ENCODE measurements at regions of chr2 and their contacts with region 1.

Region 1: DNA sequence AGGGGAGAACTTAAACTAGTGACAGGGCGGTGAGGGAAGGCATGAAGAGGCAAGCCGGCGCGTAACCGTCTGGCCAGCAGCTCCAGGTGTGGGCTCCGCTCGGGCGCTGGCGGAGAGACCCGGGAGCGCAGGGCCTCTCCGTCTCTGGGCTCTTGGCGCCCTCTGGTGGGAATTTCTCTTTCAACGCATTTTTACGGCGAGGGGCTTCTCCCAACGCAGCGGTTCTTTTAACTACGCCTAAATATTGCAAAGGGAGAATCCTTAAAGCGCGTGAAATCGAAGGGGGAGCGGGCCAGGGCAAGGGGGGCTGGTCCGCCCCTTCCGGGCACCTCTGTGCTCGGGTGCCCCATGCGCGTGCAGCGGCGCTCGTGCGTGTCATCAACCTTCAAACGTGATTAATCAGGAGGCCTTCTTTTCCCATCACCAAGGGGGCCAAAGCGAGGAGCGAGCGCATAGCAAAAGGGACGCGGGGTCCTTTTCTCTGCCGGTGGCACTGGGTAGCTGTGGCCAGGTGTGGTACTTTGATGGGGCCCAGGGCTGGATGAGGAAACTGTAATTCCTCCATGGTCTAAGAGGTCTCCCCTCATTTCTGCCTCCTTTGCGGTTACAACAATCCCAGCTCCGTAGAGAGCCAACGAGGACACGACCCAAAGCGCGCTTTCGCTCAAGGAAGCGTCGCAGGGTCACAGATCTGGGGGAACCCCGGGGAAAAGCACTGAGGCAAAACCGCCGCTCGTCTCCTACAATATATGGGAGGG is 762 bp upstream of the GAD1 start:
- DNase-seq: peak; percentile 77
- H3K4me3 Mint-ChIP-seq: peak overlapping the region; percentile 68
- H3K27ac Mint-ChIP-seq: no peak overlapping the region
- H3K4me1 Mint-ChIP-seq: peaks cover 43% of the 10 kb centered on the region
- H3K27me3 Mint-ChIP-seq: peaks cover 72% of the 10 kb centered on the region

Region 2: GRCh38 chr2:170235860-170236679 is 579.9 kb before region 1 on chr2:
- CTCF ChIA-PET with region 1: interaction called, 7 read pairs
- intact Hi-C with region 1: loop called (anchors 1 kb)
- DNase-seq: peak; percentile 31
- H3K4me3 Mint-ChIP-seq: no peak overlapping the region
- H3K27ac Mint-ChIP-seq: no peak overlapping the region
- H3K4me1 Mint-ChIP-seq: no peaks in the 10 kb centered on the region
- H3K27me3 Mint-ChIP-seq: peaks cover 13% of the 10 kb centered on the region

Region 3: DNA sequence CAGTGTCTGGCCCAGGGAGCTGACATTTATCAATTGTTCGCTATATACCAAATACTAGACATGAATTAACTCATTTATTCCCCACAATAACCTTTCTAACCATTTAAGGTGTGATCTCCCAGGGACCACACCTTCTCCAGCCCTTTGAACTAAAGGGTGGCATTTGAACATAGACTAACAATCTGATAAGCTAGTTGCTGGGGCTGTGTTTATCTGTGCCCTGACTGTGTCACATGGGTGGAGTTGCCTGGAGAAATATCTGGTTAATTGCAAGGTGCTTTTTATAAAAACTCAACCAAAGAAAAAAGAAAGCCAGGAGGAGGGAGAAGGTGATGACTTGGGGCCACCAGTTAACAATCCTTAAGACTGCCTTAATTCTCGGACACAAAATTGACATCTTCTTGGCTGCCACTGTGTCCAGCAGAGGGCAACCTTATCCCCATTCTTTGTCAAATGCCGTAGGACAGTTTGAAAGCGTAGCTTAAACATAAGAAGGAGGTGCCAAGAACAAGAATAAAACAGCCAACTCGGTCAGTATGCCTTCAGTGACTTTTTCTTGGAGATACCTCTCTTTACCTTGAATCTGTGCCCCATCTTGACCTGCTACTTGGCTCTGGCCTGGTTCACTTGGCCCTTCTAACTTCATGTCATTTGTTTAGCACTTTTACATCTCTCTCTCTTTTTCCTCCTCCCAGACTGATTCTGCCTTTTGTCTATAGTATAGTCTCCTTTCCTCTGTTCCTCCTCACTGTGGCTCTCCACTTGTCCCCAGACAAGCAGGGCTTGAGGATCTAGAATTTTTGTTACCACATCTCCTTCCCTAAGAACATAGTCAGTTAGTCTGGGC is 454.6 kb before region 1 on chr2:
- CTCF ChIA-PET with region 1: interaction called, 21 read pairs
- intact Hi-C with region 1: loop called (anchors 1 kb)
- DNase-seq: peak; percentile 77
- H3K4me3 Mint-ChIP-seq: no peak overlapping the region
- H3K27ac Mint-ChIP-seq: no peak overlapping the region
- H3K4me1 Mint-ChIP-seq: peaks cover 28% of the 10 kb centered on the region
- H3K27me3 Mint-ChIP-seq: peaks cover 6% of the 10 kb centered on the region

Region 4: DNA sequence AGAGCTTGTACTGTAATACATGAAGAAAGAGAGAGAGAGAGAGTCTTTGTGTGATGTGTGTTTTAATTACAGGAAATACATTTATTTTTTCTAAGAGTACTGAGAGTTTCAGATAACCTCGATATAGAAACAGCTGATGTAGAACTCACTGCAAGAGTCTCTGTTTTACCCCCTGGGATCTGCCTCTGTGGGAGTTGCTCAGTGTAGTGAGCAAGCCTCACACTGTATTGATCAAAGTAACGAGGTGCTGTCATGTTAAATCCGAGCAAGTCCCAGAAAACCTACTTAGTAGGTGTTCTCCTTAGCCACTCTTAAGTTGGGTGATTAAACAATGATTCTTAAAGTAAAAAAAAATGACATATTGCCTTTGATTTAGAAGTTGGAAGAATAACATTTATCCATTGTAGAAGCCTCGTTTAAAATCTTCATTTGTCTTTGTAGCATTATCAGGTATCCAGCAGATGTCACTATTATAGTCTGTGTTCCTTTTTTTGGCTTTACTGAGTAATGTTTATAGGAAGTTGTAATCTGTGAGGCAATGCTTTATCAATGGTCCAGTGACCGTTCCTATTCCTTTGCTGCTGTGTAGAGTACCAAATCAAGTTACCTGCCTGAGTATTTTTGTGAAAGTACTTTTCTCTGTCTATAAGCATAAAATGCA is 419.0 kb before region 1 on chr2:
- CTCF ChIA-PET with region 1: interaction called, 5 read pairs
- intact Hi-C with region 1: loop called (anchors 1 kb)
- DNase-seq: no peak
- H3K4me3 Mint-ChIP-seq: no peak overlapping the region
- H3K27ac Mint-ChIP-seq: no peak overlapping the region
- H3K4me1 Mint-ChIP-seq: peaks cover 4% of the 10 kb centered on the region
- H3K27me3 Mint-ChIP-seq: peaks cover 34% of the 10 kb centered on the region

Region 5: DNA sequence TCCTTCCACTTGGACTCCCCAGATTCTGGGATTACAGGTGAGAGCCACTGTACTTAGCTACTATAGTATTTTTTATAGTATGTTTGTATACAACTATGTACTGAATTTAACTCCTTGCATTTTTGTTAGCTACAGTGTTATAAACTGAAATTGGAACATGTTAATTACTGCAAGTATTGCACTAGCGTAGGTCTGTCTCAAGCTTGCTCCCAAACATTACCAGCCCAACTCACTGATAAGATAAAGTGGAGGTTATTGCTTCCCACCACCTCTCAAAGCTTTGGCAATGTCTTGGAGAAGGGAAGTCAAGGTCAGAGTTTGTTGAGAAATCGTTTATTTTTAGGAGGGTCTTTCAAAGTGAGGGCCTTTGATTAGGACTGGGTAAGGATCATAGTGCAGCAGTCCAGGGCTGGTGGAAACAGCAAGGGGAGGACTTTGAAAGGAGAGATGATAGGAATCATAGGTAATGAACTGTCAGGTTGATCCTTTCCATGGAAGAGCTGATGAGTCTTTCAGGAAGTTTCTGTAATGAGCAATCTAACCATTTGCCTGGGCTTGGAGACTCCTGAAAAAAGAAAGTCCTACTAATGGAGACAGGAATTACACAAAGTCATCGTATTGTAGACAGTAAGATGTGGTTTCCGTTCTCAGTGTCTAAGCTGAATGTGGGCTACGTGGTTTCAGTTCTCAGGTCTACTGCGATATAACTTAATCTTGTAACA is 380.9 kb before region 1 on chr2:
- CTCF ChIA-PET with region 1: no interaction called
- intact Hi-C with region 1: loop called (anchors 1 kb)
- DNase-seq: peak; percentile 12
- H3K4me3 Mint-ChIP-seq: no peak overlapping the region
- H3K27ac Mint-ChIP-seq: no peak overlapping the region
- H3K4me1 Mint-ChIP-seq: peaks cover 20% of the 10 kb centered on the region
- H3K27me3 Mint-ChIP-seq: peaks cover 10% of the 10 kb centered on the region

Region 6: GRCh38 chr2:170715062-170715931 is 100.6 kb before region 1 on chr2 and contains the start of gene SP5:
- CTCF ChIA-PET with region 1: interaction called, 13 read pairs
- intact Hi-C with region 1: loop called (anchors 1 kb)
- DNase-seq: no peak
- H3K4me3 Mint-ChIP-seq: peak within 1 kb of the TSS; percentile 76
- H3K27ac Mint-ChIP-seq: no peak within 1 kb of the TSS
- H3K4me1 Mint-ChIP-seq: peaks cover 33% of the 10 kb centered on the region
- H3K27me3 Mint-ChIP-seq: peaks cover 67% of the 10 kb centered on the region
- total RNA-seq, gene SP5: not detected

Region 7: DNA sequence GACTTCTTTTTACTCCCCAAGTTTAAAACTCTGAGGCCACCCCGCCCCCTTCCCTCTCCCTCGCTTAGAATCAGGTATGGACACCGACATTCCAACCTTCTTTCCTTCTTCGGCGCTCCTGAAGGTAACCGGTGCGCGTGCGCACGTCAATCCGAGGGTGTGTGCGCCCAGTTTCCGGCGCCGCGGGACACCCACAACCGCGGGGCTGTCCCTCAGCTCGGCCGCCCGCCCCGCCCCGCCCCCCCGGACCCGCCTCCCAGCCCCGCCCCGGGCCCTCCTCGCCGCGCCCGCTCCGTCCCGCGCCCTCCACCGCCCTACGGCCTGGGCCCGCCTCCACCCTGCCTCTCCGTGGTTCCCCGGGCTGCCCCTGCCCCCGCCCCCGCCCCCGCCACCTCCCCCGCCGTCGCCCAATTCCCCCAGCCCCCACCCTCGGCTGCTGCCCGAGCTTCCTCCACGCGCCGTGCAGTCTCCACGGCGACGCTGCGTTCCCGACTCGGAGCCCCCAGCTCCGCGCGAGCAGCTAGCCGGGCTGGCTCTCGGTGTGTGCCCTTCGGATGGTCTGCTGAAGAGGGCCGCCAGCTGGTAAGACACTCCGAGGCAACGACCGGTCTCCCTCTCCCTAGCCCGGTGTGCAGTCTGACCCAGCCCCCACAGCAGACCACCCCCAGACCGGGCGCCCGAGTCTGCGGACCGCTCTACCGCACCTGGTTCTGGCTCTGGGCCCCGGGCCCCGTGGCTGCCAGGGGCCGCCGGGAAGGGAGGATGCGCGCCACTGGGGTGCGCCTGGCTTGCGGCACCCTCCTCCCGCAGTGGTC is 45.1 kb before region 1 on chr2:
- CTCF ChIA-PET with region 1: interaction called, 13 read pairs
- intact Hi-C with region 1: loop called (anchors 2 kb)
- DNase-seq: peak; percentile 69
- H3K4me3 Mint-ChIP-seq: peak overlapping the region; percentile 85
- H3K27ac Mint-ChIP-seq: no peak overlapping the region
- H3K4me1 Mint-ChIP-seq: peaks cover 7% of the 10 kb centered on the region
- H3K27me3 Mint-ChIP-seq: peaks cover 9% of the 10 kb centered on the region

Region 8: DNA sequence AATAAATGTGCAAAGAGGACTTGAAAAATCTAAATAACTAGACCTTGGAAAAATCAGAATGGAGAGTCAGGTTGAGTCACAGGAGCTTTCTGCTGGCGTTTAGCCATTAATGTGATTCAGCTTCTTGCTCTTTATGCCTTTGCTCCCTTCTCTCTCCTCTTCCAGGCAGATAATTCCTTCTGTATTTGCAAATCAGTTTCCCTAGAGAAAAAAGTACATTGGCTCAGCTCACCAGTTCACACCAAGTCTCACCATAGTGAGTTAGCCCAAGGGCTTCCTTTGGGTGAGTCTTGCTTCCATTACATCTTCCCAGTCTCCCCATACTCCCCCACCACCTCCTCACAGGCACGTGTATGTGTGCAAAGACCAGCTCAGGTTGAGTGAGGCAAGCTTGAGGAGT is 780.0 kb after region 1 on chr2:
- CTCF ChIA-PET with region 1: no interaction called
- intact Hi-C with region 1: no loop called
- DNase-seq: no peak
- H3K4me3 Mint-ChIP-seq: no peak overlapping the region
- H3K27ac Mint-ChIP-seq: no peak overlapping the region
- H3K4me1 Mint-ChIP-seq: no peaks in the 10 kb centered on the region
- H3K27me3 Mint-ChIP-seq: no peaks in the 10 kb centered on the region